ENCODE measurements at regions of chr22 and their contacts with region 1.

Region 1: DNA sequence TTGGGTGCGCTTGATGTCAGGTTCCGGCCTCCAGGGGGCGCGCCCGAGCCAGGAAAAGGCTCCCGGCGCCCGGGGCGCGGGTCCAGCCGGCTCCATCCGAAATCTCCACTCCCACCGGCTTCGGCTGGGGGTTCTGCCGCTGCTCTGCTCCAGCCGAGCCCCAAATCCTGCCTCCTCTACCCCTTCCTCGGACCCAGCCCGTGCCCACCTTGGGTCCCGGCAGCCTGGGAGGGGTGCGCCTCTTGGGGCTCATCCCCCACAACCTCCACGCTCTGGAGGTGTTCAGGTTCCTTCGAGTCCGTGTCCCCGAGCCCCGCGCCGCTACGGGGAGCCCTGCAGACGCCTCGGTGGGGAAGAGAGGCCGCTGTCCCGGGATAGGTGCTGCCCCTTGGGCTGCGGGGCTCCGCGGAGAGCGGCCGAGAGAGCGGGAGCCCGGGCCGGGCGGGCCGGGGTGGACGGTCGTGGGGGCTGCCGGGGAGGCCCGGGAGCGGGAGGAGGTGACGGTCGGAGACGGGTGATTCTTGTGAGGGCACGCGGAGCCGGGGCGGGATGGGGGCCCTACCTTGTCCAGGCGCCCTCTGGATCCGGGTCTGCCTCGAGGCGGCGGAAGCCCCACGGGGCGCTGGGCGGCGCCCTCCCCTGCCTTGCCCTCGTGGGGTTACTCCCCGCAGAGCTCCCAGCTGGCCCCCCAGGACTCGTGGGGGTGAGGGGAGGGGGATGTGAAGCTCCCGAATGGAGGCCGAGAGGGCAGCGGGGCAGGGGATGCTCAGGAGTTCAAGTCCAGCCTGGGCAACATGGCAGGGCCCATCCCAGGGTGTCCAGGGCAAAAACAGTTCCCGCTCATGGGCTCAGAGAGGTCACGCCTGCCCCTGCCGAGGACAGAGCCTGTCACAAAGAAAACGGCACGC is 13.2 kb upstream of the CYB5R3 start:
- DNase-seq: peak; percentile 89 to 93
- ATAC-seq: peak; percentile 88 to 97 (median 90)
- H3K4me3 ChIP-seq: peak overlapping the region; percentile 72
- H3K27ac ChIP-seq: peak overlapping the region; percentile 46
- H3K4me1 ChIP-seq: peaks cover 5% of the 10 kb centered on the region
- H3K27me3 ChIP-seq: no peaks in the 10 kb centered on the region
- CTCF ChIP-seq: peak; percentile 88

Region 2: GRCh38 chr22:42702675-42703074 is 40.3 kb after region 1 on chr22:
- intact Hi-C with region 1: loop called (anchors 5 kb)
- DNase-seq: peak in 1 of 2 donors; percentile 34
- ATAC-seq: no peak
- H3K4me3 ChIP-seq: no peak overlapping the region
- H3K27ac ChIP-seq: no peak overlapping the region
- H3K4me1 ChIP-seq: peaks cover 34% of the 10 kb centered on the region
- H3K27me3 ChIP-seq: no peaks in the 10 kb centered on the region
- CTCF ChIP-seq: no peak

Region 3: GRCh38 chr22:42720263-42721044 is 58.1 kb after region 1 on chr22 and contains the start of gene A4GALT:
- intact Hi-C with region 1: loop called in 1 of 2 experiments (anchors 5 kb)
- DNase-seq: peak in 1 of 2 donors; percentile 58
- ATAC-seq: peak; percentile 60 to 72 (median 64)
- H3K4me3 ChIP-seq: peak within 1 kb of the TSS; percentile 85
- H3K27ac ChIP-seq: peak within 1 kb of the TSS; percentile 79
- H3K4me1 ChIP-seq: peaks cover 5% of the 10 kb centered on the region
- H3K27me3 ChIP-seq: peaks cover 0 to 12% (median 2%) of the 10 kb centered on the region in 3 donors
- CTCF ChIP-seq: no peak
- total RNA-seq, gene A4GALT: 11.2 to 28.8 (median 18.3) TPM

Region 4: DNA sequence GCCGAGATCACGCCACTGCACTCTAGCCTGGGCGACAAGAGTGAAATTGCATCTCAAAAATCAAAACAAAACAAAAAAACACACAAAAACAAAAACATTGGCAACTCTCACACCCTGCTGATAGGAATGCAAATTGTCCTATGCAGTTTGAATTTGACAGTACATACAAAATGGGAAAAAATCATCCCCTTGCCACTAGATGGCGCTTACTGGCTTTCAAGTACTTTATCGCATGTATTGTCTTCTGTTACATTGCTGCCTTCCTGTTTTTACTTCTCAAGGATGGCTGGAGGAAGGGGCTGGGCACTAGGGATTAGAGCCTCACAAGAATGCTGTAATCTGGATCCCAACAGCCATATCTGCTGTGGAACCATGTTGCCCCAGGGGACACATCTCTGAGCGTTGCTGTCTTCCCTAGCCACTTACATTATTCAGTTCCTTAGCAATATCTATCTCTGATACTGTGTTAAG is 117.7 kb after region 1 on chr22:
- intact Hi-C with region 1: loop called in 1 of 2 experiments (anchors 5 kb)
- DNase-seq: no peak
- ATAC-seq: peak; percentile 80 to 97 (median 90)
- H3K4me3 ChIP-seq: no peak overlapping the region
- H3K27ac ChIP-seq: no peak overlapping the region
- H3K4me1 ChIP-seq: no peaks in the 10 kb centered on the region
- H3K27me3 ChIP-seq: no peaks in the 10 kb centered on the region
- CTCF ChIP-seq: peak; percentile 86

Measured in psoas muscle (tissue), 8 donors.